Posterior cingulate gyrus (tissue), 11 donors: ENCODE measurements at regions of chr2 and their contacts with region 1.

Region 1: DNA sequence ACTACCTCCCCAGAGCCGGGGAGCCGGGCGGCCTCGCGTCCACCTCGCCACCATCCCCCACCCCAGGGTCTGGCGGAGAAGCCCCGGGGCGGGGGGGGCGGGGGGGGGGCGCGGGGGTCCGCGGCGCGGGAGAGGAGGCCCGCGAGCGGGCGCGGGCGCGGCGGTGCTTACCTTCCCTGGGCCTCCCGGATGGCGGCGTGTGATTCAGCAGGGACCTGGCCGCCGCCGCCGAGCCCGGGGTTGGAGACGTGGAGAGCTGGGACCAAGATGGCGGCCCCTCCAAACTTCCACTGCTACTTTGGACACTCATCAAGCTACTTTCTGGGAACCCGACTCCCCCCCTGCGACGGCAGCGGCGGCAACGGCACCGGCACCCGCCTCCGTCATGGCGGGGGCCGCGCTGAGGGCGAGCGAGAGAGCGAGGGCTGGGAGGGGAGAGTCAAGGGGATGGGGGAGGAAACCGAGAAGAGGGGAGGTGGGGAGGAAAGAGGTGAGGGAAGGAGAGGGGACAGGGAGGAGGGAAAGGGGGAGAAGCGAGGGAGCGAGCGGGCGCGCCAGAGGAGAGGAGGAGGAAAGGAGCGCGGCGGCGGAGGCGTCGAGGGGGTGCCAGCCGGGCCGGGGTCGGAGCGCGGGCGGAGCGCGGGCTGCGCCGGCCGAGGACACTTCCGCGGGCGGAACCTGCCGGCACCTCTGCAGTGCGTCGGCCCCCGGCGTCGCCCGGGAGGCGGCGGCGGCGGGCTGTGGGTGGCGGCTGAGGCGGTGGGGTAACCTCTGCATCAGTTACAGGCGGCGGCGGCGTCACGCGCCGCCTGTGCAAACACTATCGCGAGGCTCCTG is at the start of gene TLK1:
- DNase-seq: peak; percentile 36 to 92 (median 62)

Region 2: DNA sequence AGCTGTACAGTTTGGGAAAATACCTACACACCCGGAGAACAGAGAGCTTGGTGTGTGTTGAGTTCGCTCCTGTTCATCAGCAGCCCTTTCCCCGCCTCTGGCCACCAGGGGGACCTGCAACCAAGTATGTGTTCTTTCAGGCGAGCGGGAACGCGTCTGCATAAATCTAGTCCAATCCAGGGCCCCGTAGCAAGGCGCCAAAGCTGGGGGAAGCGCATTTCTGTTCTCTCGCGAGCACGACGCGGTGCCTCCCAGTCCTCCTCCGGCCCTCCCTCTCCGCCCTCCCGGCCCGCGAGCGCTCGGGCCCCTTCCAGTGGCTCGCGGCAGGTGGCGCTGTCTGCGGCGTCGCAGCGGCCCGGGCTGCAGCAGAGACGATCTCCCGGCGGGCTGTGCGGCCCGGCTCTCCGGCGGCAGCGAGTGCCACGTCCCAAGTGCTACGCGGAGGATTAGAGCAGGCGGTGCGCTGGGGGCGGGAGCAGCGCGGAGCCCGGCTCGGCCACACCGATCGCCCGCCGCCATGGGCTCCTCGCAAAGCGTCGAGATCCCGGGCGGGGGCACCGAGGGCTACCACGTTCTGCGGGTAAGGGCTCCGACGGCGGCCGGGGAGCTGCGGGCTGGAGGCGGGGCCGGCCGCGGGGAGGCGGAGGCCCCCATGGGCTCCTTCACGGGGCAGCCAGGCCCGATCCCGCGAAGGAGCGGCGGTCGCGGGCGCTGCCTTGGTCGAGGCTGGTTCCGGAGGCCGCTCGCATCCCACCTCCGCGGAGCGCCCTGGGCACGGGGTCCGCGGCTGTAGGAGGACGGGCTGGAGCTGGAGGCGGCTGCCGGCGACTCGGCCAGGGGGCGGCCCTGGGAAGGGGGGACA is 231.3 kb before region 1 on chr2 and contains the start of gene GORASP2:
- intact Hi-C with region 1: loop called (anchors 5 kb)
- DNase-seq: peak; percentile 94 to 100 (median 97)

Region 3: DNA sequence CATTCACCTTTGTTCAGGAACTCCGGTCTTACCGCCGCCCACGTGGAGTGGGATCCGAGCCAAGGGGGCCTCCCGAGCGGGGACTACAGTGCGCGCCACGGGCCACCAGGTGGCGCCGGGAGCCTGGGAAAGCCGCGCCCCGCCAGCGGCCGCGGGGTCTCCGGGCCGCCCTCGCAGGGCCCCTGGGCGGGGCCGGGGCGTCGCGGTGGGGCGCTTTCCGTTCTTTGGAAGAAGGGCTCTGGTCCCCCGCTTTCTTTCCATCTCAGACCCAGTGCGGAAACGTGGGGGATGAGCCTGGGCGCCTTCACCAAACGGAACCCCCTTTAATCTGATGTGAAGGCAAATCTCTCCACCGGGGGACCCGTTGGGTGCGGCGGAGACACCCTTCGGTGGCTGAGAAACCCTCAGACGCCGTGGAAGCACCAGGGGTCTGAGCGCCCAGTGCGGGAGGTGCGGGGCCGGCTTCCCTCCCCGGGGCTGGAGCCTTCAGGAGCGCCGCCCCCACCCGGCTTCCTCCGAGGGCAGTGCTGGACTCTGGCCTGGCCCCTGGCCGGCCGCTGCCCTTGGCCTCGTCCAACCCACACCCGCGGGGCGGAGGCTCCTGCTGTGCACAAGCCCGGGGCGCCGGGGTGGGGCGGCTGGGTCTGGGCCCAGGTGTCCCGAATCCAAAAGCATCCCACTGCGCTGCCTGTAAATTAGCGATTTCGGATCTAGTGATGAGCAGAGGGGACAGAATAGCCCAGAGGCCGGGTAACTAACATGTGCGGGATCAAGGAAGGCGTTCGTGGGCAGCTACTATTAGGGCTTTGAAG is 186.6 kb before region 1 on chr2:
- intact Hi-C with region 1: loop called (anchors 2 kb)
- DNase-seq: peak; percentile 63 to 97 (median 82)

Region 4: DNA sequence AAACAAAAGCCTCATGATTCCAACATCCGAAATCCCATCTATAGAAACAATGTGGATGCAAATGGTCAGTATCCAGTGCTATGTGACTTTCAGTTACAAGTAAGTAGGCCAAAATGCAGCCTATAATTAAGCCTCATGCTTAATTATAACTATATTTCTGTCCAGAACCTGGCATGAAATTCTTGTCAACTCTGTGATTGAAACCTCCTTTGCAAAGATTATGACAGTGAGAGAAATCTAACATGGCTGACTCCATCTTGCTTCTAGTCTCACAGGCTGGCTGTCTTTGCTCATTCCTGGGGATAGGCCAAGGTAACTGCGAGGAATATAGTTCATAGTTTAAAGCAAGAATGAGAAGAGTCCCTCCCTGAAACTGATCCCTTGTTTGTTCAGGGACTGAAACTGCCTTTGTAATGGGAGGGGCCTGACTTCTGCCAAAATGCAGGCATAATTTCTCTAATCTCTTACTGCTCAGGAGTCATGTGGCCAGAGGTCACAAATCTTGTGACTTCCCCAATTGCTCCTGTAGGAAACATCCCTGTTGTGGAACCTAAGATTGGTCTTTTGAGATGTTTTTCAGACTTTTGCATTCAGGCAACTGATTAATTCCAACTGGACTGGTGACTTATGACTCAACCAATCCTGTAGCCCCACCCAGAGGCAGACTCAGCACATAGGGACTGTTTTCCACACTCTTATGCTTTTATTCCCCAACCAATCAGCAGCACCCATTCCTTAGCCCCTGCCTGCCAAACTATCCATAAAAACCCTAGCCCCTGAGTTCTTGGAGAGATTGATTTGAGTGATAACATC is 84.8 kb after region 1 on chr2:
- intact Hi-C with region 1: no loop called
- DNase-seq: no peak

Region 5: DNA sequence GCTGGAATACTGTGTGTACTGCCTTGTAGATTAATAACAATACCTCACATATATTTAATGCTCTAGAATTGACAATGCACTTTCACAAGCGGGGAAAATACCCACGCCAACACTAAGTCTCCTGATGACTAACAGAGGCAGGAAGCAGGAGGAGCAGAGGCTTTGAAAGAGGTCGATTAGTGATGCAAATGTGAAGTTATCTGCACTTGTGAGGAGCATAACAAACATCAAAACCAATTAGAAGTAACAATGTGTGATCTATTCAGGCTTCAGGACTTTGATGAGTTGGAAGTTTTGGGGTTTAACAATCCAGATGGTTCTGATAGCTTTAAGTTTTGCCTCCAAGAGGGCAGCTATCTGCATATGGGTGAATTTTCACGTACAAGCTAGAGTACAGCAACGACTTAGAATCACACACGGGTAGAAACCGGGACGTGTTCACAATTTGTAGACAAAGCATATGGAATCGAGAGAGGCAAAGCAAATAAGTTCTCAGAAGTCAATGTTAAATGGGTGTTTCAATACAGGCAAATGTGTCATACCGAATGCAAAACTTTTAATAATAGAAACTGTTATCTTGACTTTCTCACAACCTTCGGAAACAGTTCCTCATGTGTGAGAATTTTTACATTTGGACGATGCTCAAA is 158.9 kb after region 1 on chr2:
- intact Hi-C with region 1: loop called (anchors 5 kb)
- DNase-seq: no peak

Region 6: GRCh38 chr2:171416009-171416926 is 255.9 kb after region 1 on chr2:
- intact Hi-C with region 1: loop called (anchors 2 kb)
- DNase-seq: peak; percentile 75 to 98 (median 90)

Region 7: DNA sequence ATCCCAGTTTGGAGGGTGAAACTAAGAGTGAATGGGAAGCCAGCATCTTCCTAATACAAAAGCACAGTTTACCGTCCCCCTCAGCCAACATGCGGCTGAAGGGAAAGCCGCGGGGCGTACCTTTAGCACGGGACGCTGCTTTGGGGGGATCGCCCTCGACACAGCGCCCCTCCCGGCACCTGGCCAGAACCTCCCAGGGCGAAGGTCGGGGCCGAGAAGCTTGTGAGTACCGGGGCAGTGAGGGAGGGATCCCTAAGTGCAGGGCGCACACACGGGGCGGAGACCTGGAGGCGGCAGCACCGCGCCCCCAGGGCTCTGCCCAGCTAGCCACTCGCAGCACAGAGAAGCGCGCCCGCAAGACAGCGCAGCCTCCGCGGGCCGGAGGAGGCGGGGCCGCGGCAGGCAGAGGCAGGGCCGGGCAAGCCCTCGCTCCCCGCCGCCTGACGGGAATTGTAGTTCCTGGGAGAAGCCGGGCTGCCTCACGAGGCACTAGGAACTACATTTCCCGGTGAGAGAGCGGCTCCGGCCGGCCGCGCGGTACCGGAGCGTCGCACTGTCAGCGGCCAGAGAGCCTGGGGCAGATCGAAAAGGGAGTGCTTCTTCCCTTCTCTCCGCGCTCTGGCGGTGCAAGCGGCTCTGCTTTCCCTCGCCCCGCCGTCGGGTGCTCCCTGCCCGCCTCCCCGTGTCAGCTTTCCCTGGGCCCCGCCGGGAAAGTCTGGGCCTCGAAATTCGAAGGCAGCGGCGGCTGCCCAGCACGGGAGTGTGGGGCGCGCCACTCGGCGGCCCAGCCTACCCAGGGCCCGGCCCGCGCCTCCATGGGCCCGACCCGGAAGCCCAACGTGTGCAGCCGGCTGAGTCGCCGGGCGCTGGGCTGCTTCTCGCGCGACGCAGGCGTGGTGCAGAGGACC is 273.7 kb after region 1 on chr2 and contains the starts of genes DCAF17 and METTL8:
- intact Hi-C with region 1: loop called (anchors 2 kb)
- DNase-seq: peak; percentile 93 to 99 (median 96)